Vagina (tissue), 2 donors: ENCODE measurements at regions of chr9 and their contacts with region 1.

Region 1: DNA sequence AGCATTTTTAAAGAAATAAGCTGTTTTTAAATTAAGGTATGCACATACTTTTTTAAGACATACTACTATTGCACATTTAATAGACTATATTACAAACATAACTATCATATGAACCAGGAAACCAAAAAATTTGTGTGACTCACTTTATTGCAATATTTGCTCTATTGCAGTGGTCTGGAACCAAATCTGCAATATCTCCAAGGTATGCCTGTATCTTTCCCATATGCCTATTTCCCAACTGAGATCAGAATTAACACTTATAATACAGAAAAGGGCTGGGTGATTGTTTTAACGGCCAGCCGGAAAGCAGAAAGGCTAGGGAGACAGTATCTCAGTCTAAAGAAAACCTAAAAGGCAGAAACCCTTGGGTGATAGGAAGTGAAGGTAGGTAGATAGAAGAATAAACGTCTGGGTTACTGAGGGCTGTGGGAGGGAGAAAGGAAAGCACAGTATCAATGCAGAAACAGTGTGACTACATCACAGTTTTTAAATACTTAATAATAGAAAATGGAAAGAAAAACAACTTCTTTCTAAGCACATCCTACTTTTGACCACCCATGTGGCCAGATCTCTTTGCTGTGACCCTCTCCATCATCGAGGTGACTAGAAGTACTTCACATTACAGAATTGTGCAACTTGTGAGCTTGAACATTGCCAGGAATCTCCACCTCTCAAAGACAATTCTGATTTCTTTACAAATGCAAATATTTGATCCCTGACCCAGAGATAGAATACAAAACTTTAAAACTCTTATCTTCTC is 126.4 kb downstream of the LPAR1 start:
- DNase-seq: no peak
- H3K4me3 ChIP-seq: no peak overlapping the region
- H3K27ac ChIP-seq: no peak overlapping the region
- H3K4me1 ChIP-seq: no peaks in the 10 kb centered on the region
- H3K27me3 ChIP-seq: no peaks in the 10 kb centered on the region
- CTCF ChIP-seq: no peak
- POLR2A ChIP-seq: no peak

Region 2: GRCh38 chr9:110538225-110539041 is 373.4 kb before region 1 on chr9:
- intact Hi-C with region 1: no loop called
- DNase-seq: no peak
- H3K4me3 ChIP-seq: no peak overlapping the region
- H3K27ac ChIP-seq: peak overlapping the region; percentile 29
- H3K4me1 ChIP-seq: peaks cover 7% of the 10 kb centered on the region
- H3K27me3 ChIP-seq: no peaks in the 10 kb centered on the region
- CTCF ChIP-seq: no peak
- POLR2A ChIP-seq: no peak

Region 3: GRCh38 chr9:110650991-110651411 is 260.8 kb before region 1 on chr9:
- intact Hi-C with region 1: loop called (anchors 5 kb)
- DNase-seq: no peak
- H3K4me3 ChIP-seq: no peak overlapping the region
- H3K27ac ChIP-seq: peak overlapping the region; percentile 51
- H3K4me1 ChIP-seq: peaks cover 9% of the 10 kb centered on the region
- H3K27me3 ChIP-seq: no peaks in the 10 kb centered on the region
- CTCF ChIP-seq: no peak
- POLR2A ChIP-seq: no peak